ENCODE measurements at regions of chr12 and their contacts with region 1.

Region 1: DNA sequence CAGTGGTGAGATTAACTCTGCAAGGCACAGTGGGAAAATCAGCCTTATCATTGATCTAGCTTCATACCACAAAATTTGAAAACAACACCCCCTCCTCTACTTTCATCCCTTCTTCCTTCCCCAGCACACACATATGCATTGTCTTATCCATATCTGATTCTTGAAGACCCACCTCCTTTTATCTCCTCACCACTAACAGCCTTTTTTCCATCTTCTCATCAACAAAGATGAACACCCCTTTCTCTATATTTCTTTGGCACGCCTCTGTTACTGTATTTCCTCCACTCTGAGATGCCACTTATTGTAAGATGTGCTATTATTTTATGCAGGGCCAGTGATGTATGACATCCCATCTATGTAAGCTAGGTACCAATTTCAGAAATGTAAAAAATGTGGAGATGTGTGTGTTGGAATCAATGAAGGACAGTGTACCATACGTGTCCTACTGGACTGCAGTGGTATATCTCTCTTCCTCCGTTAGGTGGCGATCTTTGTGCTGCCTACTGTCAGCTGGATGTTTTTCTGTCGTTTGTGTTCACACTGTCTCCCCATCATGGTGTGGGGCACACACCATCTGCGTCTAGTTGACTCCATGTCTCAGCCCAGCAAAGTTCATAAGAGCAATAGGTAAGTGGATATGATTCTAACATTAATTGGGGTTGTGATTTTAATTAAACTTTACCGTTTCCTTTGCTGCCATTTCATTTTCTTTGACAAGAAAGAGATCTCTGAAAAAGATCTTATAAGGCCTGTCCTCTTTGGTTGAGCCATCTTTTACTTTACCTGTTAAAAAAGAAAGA is 24.0 kb downstream of the CCDC38 start:
- DNase-seq: peak in 7 of 9 donors; percentile 28 to 67 (median 59)
- ATAC-seq: peak; percentile 97
- H3K4me3 ChIP-seq: no peak overlapping the region
- H3K4me3 Mint-ChIP-seq: no peak overlapping the region
- H3K27ac ChIP-seq: no peak overlapping the region
- H3K27ac Mint-ChIP-seq: no peak overlapping the region
- H3K4me1 ChIP-seq: no peaks in the 10 kb centered on the region
- H3K4me1 Mint-ChIP-seq: peaks cover 0 to 2% (median 0%) of the 10 kb centered on the region in 7 donors
- H3K27me3 ChIP-seq: no peaks in the 10 kb centered on the region
- H3K27me3 Mint-ChIP-seq: peaks cover 0 to 15% (median 5%) of the 10 kb centered on the region in 5 donors

Region 2: GRCh38 chr12:95790033-95790911 is 128.1 kb before region 1 on chr12 and contains the start of gene NTN4:
- CTCF ChIA-PET with region 1: no interaction called
- POLR2A ChIA-PET with region 1: no interaction called
- intact Hi-C with region 1: no loop called
- DNase-seq: peak in 7 of 9 donors; percentile 2 to 39 (median 12)
- ATAC-seq: peak; percentile 52
- H3K4me3 ChIP-seq: peak within 1 kb of the TSS; percentile 51
- H3K4me3 Mint-ChIP-seq: peak within 1 kb of the TSS; percentile 73 to 95 (median 84)
- H3K27ac ChIP-seq: no peak within 1 kb of the TSS
- H3K27ac Mint-ChIP-seq: peak within 1 kb of the TSS in 1 of 9 donors; percentile 30
- H3K4me1 ChIP-seq: peaks cover 0 to 8% of the 10 kb centered on the region in 2 donors
- H3K4me1 Mint-ChIP-seq: peaks cover 6 to 22% (median 12%) of the 10 kb centered on the region in 7 donors
- H3K27me3 ChIP-seq: peaks cover 0 to 4% of the 10 kb centered on the region in 2 donors
- H3K27me3 Mint-ChIP-seq: peaks cover 55 to 87% (median 71%) of the 10 kb centered on the region in 5 donors
- total RNA-seq, gene NTN4: 0.08 to 0.86 TPM in 2 of 5 experiments, not detected in the others

Region 3: DNA sequence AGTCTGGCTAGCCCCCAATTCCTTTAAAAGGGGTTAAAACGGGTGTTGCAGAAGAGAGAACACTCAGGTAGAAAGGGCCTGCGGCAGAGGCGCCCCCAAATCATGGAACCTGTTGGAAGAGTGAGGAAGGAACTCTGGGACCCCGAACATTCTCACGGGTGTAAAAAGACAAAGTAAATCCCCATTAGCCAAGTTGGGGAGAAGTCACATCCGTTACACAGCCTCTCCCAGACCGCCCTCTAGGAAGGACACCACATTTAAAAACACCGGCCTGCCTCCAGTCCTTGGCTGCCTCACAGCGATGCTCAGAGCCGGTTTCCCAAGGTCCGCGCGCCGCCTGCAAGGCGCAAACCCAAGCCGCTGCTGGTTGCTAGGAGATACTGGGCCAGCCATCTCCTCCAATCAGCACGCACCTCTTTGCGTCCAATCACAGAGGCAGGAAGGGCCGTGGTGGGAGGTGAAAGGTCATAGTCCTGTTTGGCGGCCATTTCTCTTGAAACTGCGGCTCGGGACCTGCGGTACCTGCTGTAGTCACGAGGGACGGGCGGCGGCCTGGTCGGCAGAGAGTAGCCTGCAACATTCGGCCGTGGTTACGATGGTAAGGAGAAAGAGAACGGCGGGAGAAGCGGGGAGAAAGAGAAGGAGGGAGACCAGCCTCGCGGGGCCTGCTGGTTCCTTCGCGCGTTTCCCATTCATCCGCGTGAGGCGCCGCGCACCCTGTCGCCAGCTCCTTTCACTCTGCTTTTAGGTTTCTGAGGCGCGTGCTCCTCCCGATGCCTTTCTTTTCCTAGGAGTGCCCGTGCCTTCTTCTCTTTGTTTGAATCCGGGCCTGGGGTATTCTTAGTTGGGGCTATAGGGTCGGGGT is 59.7 kb before region 1 on chr12 and contains the start of gene SNRPF:
- CTCF ChIA-PET with region 1: interaction called, 3 read pairs
- POLR2A ChIA-PET with region 1: no interaction called
- intact Hi-C with region 1: loop called in 1 of 2 experiments (anchors 2 kb)
- DNase-seq: peak; percentile 88 to 96 (median 92)
- ATAC-seq: peak; percentile 98
- H3K4me3 ChIP-seq: peak within 1 kb of the TSS; percentile 82
- H3K4me3 Mint-ChIP-seq: no peak within 1 kb of the TSS
- H3K27ac ChIP-seq: peak within 1 kb of the TSS; percentile 86
- H3K27ac Mint-ChIP-seq: no peak within 1 kb of the TSS
- H3K4me1 ChIP-seq: peaks cover 11 to 12% of the 10 kb centered on the region in 2 donors
- H3K4me1 Mint-ChIP-seq: peaks cover 13 to 27% (median 16%) of the 10 kb centered on the region in 7 donors
- H3K27me3 ChIP-seq: no peaks in the 10 kb centered on the region
- H3K27me3 Mint-ChIP-seq: peaks cover 3 to 11% (median 7%) of the 10 kb centered on the region in 5 donors
- total RNA-seq, gene SNRPF: 19.0 to 40.4 (median 21.7) TPM

Region 4: GRCh38 chr12:95951515-95951914 is 33.1 kb after region 1 on chr12:
- CTCF ChIA-PET with region 1: interaction called, 4 read pairs
- POLR2A ChIA-PET with region 1: no interaction called
- intact Hi-C with region 1: loop called in 1 of 2 experiments (anchors 2 kb)
- DNase-seq: no peak
- ATAC-seq: no peak
- H3K4me3 ChIP-seq: no peak overlapping the region
- H3K4me3 Mint-ChIP-seq: no peak overlapping the region
- H3K27ac ChIP-seq: no peak overlapping the region
- H3K27ac Mint-ChIP-seq: no peak overlapping the region
- H3K4me1 ChIP-seq: no peaks in the 10 kb centered on the region
- H3K4me1 Mint-ChIP-seq: peaks cover 0 to 3% (median 0%) of the 10 kb centered on the region in 7 donors
- H3K27me3 ChIP-seq: no peaks in the 10 kb centered on the region
- H3K27me3 Mint-ChIP-seq: peaks cover 0 to 35% (median 4%) of the 10 kb centered on the region in 5 donors

Region 5: GRCh38 chr12:95998611-95999286 is 80.4 kb after region 1 on chr12:
- CTCF ChIA-PET with region 1: interaction called, 85 read pairs
- POLR2A ChIA-PET with region 1: no interaction called
- intact Hi-C with region 1: loop called (anchors 1 kb)
- DNase-seq: peak in 7 of 9 donors; percentile 44 to 69 (median 58)
- ATAC-seq: peak; percentile 96
- H3K4me3 ChIP-seq: no peak overlapping the region
- H3K4me3 Mint-ChIP-seq: peak overlapping the region in 1 of 10 donors; percentile 11
- H3K27ac ChIP-seq: no peak overlapping the region
- H3K27ac Mint-ChIP-seq: peak overlapping the region in 5 of 9 donors; percentile 2 to 68 (median 16)
- H3K4me1 ChIP-seq: no peaks in the 10 kb centered on the region
- H3K4me1 Mint-ChIP-seq: peaks cover 0 to 13% (median 3%) of the 10 kb centered on the region in 7 donors
- H3K27me3 ChIP-seq: no peaks in the 10 kb centered on the region
- H3K27me3 Mint-ChIP-seq: no peaks in the 10 kb centered on the region

Region 6: DNA sequence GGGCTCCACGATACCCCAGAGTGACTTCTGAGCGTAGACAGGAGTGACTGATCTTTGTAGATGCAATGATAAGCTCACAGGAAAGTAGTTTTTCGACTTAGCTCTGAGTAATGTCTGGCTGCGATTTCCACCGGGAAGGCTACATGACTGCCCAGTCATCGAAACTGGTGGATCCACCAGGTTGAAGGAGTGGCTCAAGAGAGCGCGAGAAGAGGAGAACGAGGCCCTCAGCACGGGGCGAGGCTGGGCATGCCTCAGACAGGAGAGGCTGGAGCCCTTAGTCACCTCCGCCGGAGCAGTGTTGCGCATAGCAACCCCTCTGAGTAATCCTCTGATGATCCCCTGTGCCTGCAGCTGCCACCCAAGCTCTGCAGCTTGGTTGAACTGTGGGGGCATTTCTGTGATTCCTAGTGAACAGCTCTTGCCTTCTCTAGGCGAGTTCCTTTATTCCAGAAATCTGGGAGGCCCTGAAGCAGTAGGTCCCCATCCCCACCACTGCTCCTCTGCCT is 301.4 kb after region 1 on chr12:
- CTCF ChIA-PET with region 1: no interaction called
- POLR2A ChIA-PET with region 1: no interaction called
- intact Hi-C with region 1: loop called in 1 of 2 experiments (anchors 1 kb)
- DNase-seq: no peak
- ATAC-seq: no peak
- H3K4me3 ChIP-seq: no peak overlapping the region
- H3K4me3 Mint-ChIP-seq: no peak overlapping the region
- H3K27ac ChIP-seq: no peak overlapping the region
- H3K27ac Mint-ChIP-seq: peak overlapping the region in 2 of 9 donors; percentile 20 to 51
- H3K4me1 ChIP-seq: peaks cover 6 to 7% of the 10 kb centered on the region in 2 donors
- H3K4me1 Mint-ChIP-seq: peaks cover 12 to 60% (median 40%) of the 10 kb centered on the region in 7 donors
- H3K27me3 ChIP-seq: no peaks in the 10 kb centered on the region
- H3K27me3 Mint-ChIP-seq: no peaks in the 10 kb centered on the region

Measured in naive thymus-derived CD4-positive, alpha-beta T cell (primary cell).